ENCODE measurements at regions of chr1 and their contacts with region 1.

Region 1: GRCh38 chr1:223531742-223532341 is 133.7 kb downstream of the CAPN8 start:
- DNase-seq: no peak
- ATAC-seq: peak; percentile 95
- H3K4me3 ChIP-seq: no peak overlapping the region
- H3K27ac ChIP-seq: no peak overlapping the region
- H3K4me1 ChIP-seq: no peaks in the 10 kb centered on the region
- H3K27me3 ChIP-seq: no peaks in the 10 kb centered on the region; a peak in 1 of 4 replicates
- CTCF ChIP-seq: peak; percentile 84 to 86 (median 84)
- EP300 ChIP-seq: no peak
- POLR2A ChIP-seq: no peak
- RAD21 ChIP-seq: peak; percentile 78

Region 2: GRCh38 chr1:223611936-223612335 is 80.1 kb after region 1 on chr1:
- CTCF ChIA-PET with region 1: interaction called, 17 read pairs
- POLR2A ChIA-PET with region 1: interaction called, 3 read pairs
- RAD21 ChIA-PET with region 1: no interaction called
- SMC1A ChIA-PET with region 1: interaction called, 11 read pairs
- in situ Hi-C with region 1: no loop called
- intact Hi-C with region 1: no loop called
- DNase-seq: no peak
- ATAC-seq: no peak
- H3K4me3 ChIP-seq: no peak overlapping the region
- H3K27ac ChIP-seq: no peak overlapping the region
- H3K4me1 ChIP-seq: no peaks in the 10 kb centered on the region
- H3K27me3 ChIP-seq: peaks cover 0 to 3% of the 10 kb centered on the region in 2 experiments; a peak in 1 of 4 replicates
- CTCF ChIP-seq: no peak
- EP300 ChIP-seq: no peak
- POLR2A ChIP-seq: no peak
- RAD21 ChIP-seq: no peak

Region 3: DNA sequence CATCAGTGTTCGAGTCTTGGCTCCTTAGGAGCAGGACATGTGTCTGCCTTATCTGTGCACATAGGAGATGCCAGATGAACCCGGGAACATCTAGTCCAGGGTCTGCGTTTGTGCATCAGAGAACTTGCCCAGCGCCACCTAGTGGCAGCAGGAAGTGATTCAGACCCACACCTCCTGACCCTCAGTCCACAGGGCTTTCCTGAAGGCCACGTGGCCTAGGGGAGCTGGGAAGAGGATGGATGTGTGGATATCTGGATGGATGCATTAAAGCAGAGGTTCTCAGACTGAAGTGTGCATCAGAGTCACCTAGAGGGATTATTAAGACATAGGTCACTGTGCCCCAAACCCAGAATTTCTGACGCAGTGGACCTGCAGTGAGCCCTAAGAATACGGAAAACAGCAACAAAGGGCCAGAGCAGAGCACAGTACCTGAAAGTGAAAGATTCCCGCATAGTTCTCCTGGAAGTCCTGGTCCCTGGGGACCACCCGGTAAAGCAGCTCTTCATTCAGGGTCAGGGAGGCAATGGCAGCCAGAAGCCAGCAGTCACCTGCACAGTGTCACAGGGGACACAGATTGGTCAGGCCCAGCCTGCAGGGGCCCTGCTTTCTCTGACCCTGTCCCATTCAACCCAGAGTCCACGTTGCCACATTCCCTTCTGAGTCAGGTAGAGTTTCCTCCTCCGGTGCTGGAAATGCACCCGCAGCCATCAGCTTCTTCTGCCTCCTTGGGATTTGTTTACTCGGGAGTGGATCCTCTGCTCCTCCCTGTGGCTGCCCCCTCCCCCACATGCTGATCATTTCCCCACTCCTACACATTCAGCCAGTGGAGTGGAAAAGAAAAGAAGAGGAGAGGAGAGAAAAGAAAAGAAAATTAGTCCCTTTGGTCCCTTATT is 96.6 kb after region 1 on chr1:
- CTCF ChIA-PET with region 1: interaction called, 60 read pairs
- POLR2A ChIA-PET with region 1: interaction called, 4 read pairs
- RAD21 ChIA-PET with region 1: interaction called, 21 read pairs
- SMC1A ChIA-PET with region 1: interaction called, 31 read pairs
- in situ Hi-C with region 1: no loop called
- intact Hi-C with region 1: loop called (anchors 1 kb)
- DNase-seq: no peak
- ATAC-seq: peak; percentile 90
- H3K4me3 ChIP-seq: no peak overlapping the region
- H3K27ac ChIP-seq: no peak overlapping the region
- H3K4me1 ChIP-seq: no peaks in the 10 kb centered on the region
- H3K27me3 ChIP-seq: peaks cover 0 to 3% of the 10 kb centered on the region in 2 experiments; a peak in 1 of 4 replicates
- CTCF ChIP-seq: peak; percentile 67 to 78 (median 71)
- EP300 ChIP-seq: no peak
- POLR2A ChIP-seq: no peak
- RAD21 ChIP-seq: peak; percentile 58

Region 4: GRCh38 chr1:223683586-223684487 is 152.0 kb after region 1 on chr1:
- CTCF ChIA-PET with region 1: interaction called, 36 read pairs
- POLR2A ChIA-PET with region 1: no interaction called
- RAD21 ChIA-PET with region 1: interaction called, 5 read pairs
- SMC1A ChIA-PET with region 1: interaction called, 14 read pairs
- in situ Hi-C with region 1: no loop called
- intact Hi-C with region 1: loop called (anchors 1 kb)
- DNase-seq: no peak
- ATAC-seq: peak; percentile 81
- H3K4me3 ChIP-seq: no peak overlapping the region
- H3K27ac ChIP-seq: no peak overlapping the region
- H3K4me1 ChIP-seq: no peaks in the 10 kb centered on the region
- H3K27me3 ChIP-seq: no peaks in the 10 kb centered on the region; a peak in 2 of 4 replicates
- CTCF ChIP-seq: peak; percentile 53 to 75 (median 67)
- EP300 ChIP-seq: no peak
- POLR2A ChIP-seq: no peak
- RAD21 ChIP-seq: peak; percentile 80

Measured in GM12878 (cell line).